Right ventricle myocardium inferior (tissue), 1 donor: ENCODE measurements at regions of chr2 and their contacts with region 1.

Region 1: DNA sequence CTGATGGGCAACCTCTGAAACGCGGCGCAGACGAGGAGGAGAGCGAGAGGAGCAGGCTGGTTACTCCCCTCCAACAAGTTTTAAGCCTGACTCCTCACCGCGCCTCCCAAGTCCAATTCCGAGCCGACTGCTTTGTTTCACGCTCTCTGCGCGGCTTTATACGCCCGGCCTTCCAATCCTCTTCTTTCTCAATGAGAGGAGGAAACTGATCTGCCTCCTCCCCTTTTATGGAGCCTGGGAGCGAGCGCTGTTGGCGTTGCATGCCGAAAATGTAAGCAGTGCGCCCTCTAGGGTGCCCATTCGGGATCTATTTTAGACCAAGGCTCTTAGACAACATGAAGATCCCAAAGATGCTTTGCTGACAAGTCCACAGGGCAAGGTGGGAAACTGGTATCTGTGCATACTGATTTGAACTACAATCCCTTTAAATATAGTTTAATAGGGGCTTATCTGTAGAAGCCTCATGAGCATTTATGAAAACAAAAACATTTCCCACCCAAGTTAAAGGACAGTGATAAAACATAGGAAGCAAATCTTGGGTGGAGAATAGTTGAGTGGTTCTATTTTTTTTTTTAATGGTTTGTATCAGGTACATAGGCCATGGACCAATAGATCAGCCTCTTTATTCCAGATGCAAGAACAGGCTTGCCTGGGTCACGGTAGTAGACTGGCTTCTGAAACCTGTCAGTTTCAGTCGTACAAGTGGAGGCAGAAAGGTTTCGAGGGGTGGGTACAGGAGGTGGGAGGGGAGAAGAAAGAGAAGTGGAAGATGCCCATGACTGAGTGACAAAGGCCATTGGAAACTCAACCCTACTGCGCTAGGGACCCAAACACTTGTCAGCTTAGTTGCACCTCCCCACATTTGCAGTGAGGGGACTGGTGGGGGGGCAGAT is at the start of gene RND3:
- DNase-seq: peak; percentile 95
- ATAC-seq: peak; percentile 82
- total RNA-seq, gene RND3: 22.1 TPM

Region 2: DNA sequence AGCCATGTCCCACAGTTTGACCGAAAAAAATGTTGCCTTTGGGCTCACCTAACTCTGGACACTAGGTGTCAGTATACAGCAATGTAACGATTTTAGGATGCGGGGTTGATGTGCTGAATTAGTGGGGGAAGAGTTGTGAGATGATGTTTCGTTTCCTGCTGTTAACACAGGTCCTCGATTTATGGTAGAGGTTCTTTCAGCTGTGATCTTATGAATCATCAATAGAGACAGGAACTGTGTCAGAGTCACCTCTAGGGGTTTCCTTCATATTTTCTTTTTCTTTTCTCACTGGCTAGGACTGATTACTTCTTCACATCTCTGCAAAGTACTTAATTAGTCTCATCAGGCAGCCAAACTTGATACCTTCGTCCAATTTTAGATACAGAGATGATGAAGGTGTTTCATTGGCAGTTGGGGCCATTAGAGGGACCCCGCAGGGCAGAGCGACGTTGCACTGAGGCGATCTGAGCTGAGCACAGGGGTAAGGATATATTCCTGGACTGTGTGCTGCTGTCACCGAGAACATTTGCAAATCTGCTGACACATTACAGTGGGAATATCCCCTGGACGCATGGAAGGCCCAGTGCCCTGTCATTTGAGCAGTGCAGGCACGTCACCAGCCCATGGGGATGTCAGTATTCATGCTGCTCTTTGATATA is 890.0 kb before region 1 on chr2:
- intact Hi-C with region 1: loop called (anchors 2 kb)
- DNase-seq: no peak
- ATAC-seq: peak; percentile 88

Region 3: DNA sequence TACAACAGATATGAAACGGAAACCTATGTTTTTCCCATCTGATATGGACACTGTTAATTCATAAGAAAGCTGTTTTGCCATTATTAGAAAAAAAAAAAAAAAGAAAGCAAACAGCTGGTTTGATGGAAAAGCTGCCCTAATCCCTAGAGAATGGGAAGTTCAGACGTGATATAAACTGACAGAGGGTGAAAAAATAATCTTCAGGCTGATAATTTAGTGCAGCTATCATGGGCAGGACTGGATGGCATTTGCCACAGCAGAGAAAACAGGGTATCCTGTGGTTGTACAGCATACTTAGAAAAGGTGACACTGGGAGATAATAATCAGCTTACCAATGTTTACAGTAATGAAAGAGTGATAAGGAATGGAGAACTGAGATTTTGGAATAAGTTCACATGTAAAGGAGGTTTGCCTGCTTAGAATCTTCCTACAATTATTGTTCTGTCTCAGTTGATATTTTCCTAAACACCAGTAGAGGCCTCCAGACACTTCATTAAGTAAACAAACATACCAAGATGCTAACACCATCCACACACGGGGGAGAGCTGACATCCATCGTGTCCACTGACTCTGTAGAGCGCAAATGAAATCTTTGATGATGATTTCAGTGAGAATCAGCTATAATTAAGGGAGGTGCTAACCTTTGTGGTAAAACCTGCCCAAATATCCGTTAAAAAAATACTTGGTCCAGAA is 688.6 kb before region 1 on chr2:
- intact Hi-C with region 1: loop called (anchors 5 kb)
- DNase-seq: no peak
- ATAC-seq: peak; percentile 88

Region 4: GRCh38 chr2:150296770-150297546 is 190.8 kb before region 1 on chr2:
- intact Hi-C with region 1: loop called (anchors 5 kb)
- DNase-seq: no peak
- ATAC-seq: peak; percentile 85

Region 5: GRCh38 chr2:150425121-150425955 is 62.4 kb before region 1 on chr2:
- intact Hi-C with region 1: loop called (anchors 2 kb)
- DNase-seq: peak; percentile 68
- ATAC-seq: peak; percentile 90

Region 6: GRCh38 chr2:150610671-150611279 is 123.0 kb after region 1 on chr2:
- intact Hi-C with region 1: loop called (anchors 2 kb)
- DNase-seq: no peak
- ATAC-seq: no peak

Region 7: DNA sequence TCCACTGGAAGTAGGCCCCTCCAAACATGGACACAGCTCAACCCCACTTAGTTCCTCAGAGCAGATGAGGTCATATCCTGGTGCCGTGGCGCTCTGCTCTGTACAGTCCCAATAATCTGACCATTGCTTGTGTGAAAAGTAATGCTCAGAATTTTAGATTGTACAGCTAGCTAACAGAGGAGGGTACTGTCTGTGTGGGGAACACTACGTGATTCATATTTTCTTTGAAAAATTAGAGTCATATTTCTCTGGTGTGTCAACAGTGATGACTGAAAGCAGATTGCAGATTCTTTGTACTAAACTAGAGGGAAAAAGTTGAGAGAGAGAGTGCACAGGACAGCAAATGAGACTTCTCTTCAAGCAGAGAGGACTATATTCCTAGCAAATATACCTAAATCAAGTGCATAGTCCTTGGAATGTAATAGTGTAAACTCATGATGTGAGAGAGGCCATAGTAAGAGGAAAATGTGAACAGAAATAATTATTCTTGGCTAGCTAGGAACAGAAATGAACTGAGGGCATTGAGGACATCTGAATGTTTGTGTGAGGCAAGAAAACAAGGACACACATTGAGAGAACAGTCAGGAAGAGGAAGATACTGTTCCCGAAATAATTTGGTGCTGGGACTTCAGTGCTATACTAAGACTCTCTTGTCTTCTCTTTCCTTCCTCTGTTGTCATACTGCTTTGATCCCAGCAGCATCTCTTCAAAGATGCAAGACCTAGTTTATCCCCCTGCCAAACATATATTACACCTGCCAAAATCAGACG is 156.7 kb after region 1 on chr2:
- intact Hi-C with region 1: no loop called
- DNase-seq: no peak
- ATAC-seq: peak; percentile 74